ENCODE measurements at regions of chr5 and their contacts with region 1.

Region 1: GRCh38 chr5:43514816-43515677 is at the start of gene C5orf34:
- DNase-seq: peak; percentile 90 to 93 (median 91)
- H3K4me3 ChIP-seq: peak within 1 kb of the TSS; percentile 54 to 92
- H3K4me3 Mint-ChIP-seq: peak within 1 kb of the TSS; percentile 90 to 97 (median 94)
- H3K27ac ChIP-seq: peak within 1 kb of the TSS; percentile 76
- H3K27ac Mint-ChIP-seq: peak within 1 kb of the TSS; percentile 90 to 98 (median 95)
- H3K4me1 ChIP-seq: peaks cover 25% of the 10 kb centered on the region
- H3K4me1 Mint-ChIP-seq: peaks cover 22 to 35% (median 27%) of the 10 kb centered on the region in 4 donors
- H3K27me3 ChIP-seq: no peaks in the 10 kb centered on the region
- H3K27me3 Mint-ChIP-seq: no peaks in the 10 kb centered on the region
- total RNA-seq, gene C5orf34: 2.5 to 2.9 TPM

Region 2: DNA sequence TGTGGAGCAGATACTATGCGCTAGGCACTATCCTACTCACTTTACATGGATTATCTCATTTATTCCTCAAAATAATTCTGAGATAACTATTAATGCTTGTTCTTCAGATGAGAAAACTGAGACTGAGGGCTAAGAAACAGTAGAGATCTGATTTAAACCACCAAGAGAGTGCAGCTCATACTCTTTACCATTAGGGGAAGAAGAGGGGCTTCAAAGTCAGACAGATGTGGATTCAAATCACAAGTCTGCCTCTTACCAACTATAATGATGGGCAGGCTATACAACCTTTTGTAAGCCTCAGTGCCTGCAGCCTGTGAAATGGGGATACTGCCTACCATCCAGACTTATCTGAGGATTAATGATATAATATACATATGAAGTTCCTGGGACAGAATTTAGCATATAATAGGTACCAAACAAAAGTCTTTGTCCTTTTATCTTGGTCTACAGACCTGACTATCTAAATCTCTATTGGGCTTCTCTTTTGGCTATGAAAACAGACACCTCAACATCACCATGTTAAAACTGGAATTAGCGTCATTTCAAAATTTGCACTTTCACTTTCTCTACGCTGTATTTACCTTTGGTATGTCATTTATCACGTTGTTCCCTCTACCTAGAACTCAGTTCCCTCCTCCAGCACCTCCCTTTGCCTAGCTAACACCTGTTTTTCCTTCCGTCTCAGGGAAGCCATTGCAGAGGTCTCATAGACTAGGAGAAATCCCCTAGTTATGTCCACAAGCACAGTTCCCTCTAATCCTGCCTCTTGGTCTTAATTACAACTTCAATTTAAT is 17.5 kb before region 1 on chr5:
- CTCF ChIA-PET with region 1: no interaction called
- POLR2A ChIA-PET with region 1: no interaction called
- intact Hi-C with region 1: no loop called
- DNase-seq: no peak
- H3K4me3 ChIP-seq: no peak overlapping the region
- H3K4me3 Mint-ChIP-seq: peak overlapping the region; percentile 2 to 83 (median 62)
- H3K27ac ChIP-seq: no peak overlapping the region
- H3K27ac Mint-ChIP-seq: peak overlapping the region in 5 of 7 donors; percentile 38 to 85 (median 55)
- H3K4me1 ChIP-seq: no peaks in the 10 kb centered on the region
- H3K4me1 Mint-ChIP-seq: no peaks in the 10 kb centered on the region
- H3K27me3 ChIP-seq: no peaks in the 10 kb centered on the region
- H3K27me3 Mint-ChIP-seq: no peaks in the 10 kb centered on the region

Region 3: DNA sequence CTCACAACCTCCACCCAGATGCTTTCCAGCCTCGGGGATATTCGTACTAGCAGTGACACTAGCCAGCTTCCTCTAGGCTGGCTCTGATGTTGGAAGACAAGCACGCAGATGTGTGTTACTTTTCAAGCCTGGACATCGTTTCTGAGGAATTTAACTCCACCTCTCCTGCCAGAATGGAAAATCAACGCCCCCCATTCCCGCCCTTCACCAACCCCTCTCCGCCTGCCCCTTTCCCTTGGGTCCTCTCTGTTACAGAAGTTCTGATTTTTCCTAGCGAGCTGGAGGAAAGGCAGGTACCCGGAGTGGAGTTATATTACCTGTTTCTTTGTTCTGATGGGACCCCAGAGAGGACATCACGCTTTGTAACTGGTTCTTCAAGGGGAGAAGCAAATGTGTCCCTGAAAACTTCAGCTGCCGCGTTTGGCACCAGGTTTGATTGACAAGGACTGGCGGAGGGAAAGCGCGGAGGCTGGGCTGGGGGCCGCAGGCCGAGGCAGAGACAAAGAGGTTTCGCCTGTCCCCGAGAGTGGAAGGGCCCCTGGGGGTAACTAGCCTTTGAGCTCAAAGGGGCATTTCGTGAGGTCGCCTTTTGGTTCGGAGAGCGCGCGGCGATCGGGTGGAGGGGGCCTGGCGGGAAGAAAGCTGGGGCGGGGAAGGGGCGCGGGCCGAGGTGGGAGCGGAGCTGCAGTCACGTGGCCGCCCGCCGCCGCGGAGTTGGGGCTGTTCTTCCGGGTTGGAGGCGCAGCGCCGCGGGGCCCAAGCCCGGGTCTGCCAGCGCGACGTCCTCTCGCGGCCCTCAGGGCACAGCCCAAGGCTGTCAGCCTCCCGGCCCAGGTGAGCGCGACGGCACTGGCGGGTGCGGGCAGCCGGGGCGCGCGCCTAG is 87.7 kb after region 1 on chr5 and contains the start of gene NNT:
- CTCF ChIA-PET with region 1: no interaction called
- POLR2A ChIA-PET with region 1: interaction called, 14 read pairs
- intact Hi-C with region 1: loop called (anchors 2 kb)
- DNase-seq: peak; percentile 75 to 84 (median 80)
- H3K4me3 ChIP-seq: peak within 1 kb of the TSS; percentile 91 to 99
- H3K4me3 Mint-ChIP-seq: peak within 1 kb of the TSS; percentile 90 to 98 (median 96)
- H3K27ac ChIP-seq: peak within 1 kb of the TSS; percentile 88
- H3K27ac Mint-ChIP-seq: peak within 1 kb of the TSS; percentile 91 to 98 (median 94)
- H3K4me1 ChIP-seq: peaks cover 38% of the 10 kb centered on the region
- H3K4me1 Mint-ChIP-seq: peaks cover 18 to 63% (median 49%) of the 10 kb centered on the region in 4 donors
- H3K27me3 ChIP-seq: no peaks in the 10 kb centered on the region
- H3K27me3 Mint-ChIP-seq: no peaks in the 10 kb centered on the region
- total RNA-seq, gene NNT: 56.1 to 57.6 TPM